ENCODE measurements at regions of chr21 and their contacts with region 1.

Region 1: GRCh38 chr21:36640721-36641244 is 58.1 kb upstream of the SIM2 start:
- DNase-seq: no peak
- H3K4me3 ChIP-seq: no peak overlapping the region
- H3K27ac ChIP-seq: peak overlapping the region; percentile 49
- H3K4me1 ChIP-seq: peaks cover 23% of the 10 kb centered on the region
- H3K27me3 ChIP-seq: no peaks in the 10 kb centered on the region
- CTCF ChIP-seq: no peak

Region 2: GRCh38 chr21:36698981-36699891 is 58.5 kb after region 1 on chr21 and contains the start of gene SIM2:
- CTCF ChIA-PET with region 1: no interaction called
- POLR2A ChIA-PET with region 1: no interaction called
- intact Hi-C with region 1: loop called (anchors 5 kb)
- DNase-seq: peak; percentile 60 to 83
- H3K4me3 ChIP-seq: peak within 1 kb of the TSS; percentile 87
- H3K27ac ChIP-seq: peak within 1 kb of the TSS; percentile 64
- H3K4me1 ChIP-seq: 0 out of 2 replicates have a peak, but pooled peaks cover 14% of the 10 kb centered on the region
- H3K27me3 ChIP-seq: no peaks in the 10 kb centered on the region
- CTCF ChIP-seq: no peak
- total RNA-seq, gene SIM2: 17.9 and 18.5 TPM in 2 replicates

Measured in PC-9 (cell line).